ENCODE measurements at regions of chr2 and their contacts with region 1.

Region 1: DNA sequence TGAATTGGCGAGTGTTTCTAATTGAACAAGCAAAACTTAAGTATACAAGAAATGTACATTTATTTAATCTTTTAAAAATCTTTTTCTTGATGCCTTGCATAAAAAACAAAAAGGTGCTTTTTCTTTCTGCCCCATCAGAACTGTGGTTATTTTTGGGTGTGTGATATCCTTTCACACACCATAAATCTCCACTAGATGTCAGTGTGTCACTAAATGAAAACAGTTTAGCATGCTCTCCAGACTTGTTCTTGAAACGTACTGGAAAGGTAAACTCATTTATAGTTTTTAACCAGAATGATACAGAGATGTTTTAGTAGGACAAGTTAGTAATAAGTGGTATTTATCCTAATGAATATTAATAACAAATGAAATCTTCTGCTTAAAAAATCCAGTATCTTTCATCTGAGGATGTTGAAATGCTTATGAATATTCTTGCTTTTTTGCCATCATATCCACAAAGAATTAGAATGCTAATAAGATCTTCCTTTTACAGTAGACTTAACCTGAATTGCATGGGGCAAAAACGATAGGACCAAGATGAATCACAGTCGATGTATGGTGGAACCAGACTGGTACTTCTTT is 96.8 kb downstream of the UBE2E3 start:
- DNase-seq: peak; percentile 40
- CTCF ChIP-seq: peak; percentile 66

Region 2: DNA sequence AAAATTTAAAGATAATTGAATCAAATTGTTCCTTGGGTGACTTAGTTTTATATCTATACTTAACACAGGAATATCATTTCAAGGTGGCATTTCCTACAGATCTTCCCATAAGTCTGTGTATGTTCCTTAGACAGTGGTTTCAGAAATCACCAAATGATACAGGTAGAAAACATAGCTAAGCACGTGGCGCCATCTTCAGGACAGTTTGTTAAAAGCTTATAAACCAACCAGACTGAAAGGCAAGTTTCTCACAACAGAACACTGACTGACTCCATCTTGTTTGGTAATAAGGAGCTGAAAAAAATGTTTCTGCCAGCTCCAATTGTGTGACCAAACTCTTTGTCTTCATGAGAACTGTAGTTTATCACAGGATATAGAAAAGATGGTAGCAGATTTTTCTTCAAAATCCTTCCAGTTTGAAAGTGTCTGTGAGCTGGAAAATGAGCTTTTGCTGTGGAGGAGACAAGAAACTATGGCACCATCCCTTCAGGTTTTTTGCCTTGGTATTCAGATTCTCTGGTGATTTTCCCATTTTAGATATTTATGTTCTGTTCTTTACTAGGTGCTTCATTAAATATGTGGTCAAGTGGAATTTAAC is 637.9 kb after region 1 on chr2:
- in situ Hi-C with region 1: loop called (anchors 10 kb)
- DNase-seq: peak; percentile 56
- CTCF ChIP-seq: peak; percentile 74

Region 3: DNA sequence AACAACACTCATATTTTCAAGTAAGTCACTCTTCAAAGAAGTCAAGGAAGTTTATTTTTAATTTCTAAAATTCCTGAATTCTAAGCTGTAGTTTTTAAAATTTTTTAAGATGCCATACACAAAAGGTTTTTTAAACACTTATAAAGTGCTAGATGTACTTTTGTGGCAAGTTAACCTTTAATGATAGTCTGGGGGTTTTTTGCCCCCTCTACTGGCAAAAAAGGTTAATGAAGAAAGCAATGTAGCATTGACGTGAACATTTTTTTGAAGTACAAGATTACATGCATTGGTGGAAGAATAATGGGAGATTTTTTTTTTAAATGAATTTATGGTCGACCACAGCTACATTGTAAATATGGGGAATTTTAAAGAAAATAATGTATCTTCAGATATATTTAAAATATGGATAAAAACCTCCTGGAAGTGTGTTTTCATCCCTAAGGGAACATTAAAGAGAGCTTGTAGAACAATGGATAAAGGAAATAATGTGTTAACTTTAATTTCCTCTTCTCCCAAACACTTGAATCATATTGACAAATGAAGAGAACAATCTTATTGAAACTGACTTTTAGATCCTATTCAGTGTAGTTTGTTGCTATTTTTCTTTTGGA is 826.9 kb after region 1 on chr2:
- in situ Hi-C with region 1: loop called (anchors 25 kb)
- DNase-seq: no peak
- CTCF ChIP-seq: peak; percentile 54